ENCODE measurements at regions of chr1 and their contacts with region 1.

Region 1: DNA sequence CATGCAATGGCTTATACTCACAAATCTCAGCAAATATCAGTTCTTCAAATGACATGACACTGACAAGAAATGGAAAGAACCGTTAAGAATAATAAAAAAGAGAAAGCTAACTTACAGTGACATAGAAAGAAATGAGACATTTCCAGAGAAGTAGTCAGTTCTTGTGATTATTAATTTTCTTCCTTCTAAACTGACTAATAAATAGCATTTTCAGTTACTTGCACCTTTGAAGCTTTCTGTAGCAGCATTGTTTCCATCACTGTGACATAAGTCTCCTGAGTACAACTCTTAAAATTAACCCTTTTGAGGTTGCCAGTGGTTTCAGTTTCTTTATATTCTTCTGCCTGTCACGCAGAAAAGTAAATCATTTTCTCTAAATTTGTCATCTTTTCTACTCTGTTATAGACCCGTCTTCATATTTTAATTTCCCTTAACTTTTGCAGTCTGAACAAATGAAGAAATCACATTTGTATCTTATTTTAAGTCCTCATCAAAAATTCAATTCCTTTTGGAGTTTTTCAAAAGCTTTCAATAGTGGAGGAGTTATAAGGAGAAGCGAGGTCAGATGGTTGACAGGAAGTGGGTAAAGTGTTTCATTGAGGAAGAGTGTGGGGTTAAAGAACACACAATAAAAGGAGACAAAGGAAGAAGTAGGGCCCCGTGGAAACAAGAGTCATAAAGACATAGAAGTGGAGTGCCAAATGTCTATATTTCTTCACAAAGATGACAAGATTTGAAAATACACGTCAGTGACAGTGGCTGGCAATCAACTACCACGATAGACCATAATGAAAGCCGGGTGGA is 57.9 kb upstream of the S1PR1 start:
- DNase-seq: peak; percentile 65
- ATAC-seq: peak; percentile 69
- H3K4me3 Mint-ChIP-seq: peak overlapping the region; percentile 71
- H3K27ac Mint-ChIP-seq: peak overlapping the region; percentile 99
- H3K4me1 Mint-ChIP-seq: peaks cover 87% of the 10 kb centered on the region
- H3K27me3 Mint-ChIP-seq: no peaks in the 10 kb centered on the region

Region 2: DNA sequence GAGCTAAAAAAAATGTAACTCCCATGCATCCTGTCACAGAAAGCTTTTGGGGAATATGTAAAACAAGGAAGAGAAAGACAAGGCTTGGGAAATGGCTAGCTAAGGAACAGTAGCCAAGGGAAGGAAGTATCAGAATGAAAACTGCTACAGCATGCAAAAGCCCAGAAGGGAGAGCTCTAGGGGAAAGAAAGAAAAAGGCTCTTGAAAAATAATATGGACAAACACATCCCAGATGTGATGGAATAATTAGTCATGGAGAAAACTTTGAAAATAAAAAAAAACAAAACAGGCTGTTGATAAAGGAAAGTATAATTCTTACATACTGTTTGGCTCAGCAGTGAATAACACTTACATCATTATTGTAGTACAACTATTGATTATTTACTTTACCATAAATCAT is 507.3 kb before region 1 on chr1:
- CTCF ChIA-PET with region 1: no interaction called
- POLR2A ChIA-PET with region 1: no interaction called
- intact Hi-C with region 1: no loop called
- DNase-seq: no peak
- ATAC-seq: no peak
- H3K4me3 Mint-ChIP-seq: no peak overlapping the region
- H3K27ac Mint-ChIP-seq: no peak overlapping the region
- H3K4me1 Mint-ChIP-seq: no peaks in the 10 kb centered on the region
- H3K27me3 Mint-ChIP-seq: peaks cover 14% of the 10 kb centered on the region

Region 3: DNA sequence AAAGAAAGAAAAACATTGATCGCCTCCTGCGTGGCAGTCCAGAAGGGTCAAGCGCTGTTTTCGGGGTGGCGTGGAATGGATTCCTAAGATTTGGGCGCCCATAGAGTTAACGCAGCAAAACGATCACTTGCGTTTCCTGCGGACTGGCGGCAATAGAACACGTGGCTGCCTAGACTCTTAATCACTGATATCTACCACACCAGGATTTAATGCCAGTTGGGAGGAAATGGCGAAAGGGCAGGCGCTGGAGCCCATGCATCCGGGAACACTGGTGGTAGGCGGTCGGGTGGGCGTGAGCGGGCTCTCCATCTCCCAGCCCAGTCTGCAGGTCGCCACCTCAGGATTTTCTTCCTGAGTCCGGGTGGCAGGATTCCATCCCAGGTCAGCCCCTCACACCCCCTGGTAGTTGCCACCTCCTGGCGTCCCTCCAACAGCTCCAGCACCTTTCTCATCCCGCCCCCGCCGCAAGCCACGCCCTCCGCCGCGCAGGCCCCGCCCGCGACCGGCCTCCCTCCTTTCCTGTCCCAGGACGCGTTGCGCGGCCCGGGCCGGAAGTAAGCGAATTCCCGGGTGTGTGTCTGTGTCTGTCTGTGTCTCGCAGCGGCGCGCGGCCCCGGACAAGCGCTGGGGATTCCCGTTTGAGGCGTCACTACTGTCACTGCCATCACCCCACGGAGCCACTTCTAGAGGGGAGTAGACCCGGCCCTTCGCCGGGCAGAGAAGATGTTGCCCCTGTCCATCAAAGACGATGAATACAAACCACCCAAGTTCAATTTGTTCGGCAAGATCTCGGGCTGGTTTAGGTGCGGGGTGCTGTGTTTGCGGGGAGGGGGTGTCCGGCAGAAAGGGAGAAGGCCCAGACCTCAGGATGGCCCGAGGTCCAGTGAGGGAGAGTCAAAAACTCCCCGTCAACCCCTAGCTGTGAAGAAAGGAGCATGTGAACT is 283.1 kb before region 1 on chr1 and contains the start of gene SLC30A7:
- CTCF ChIA-PET with region 1: no interaction called
- POLR2A ChIA-PET with region 1: no interaction called
- intact Hi-C with region 1: loop called (anchors 1 to 2 kb)
- DNase-seq: peak; percentile 98
- ATAC-seq: peak; percentile 81
- H3K4me3 Mint-ChIP-seq: peak within 1 kb of the TSS; percentile 100
- H3K27ac Mint-ChIP-seq: peak within 1 kb of the TSS; percentile 100
- H3K4me1 Mint-ChIP-seq: peaks cover 44% of the 10 kb centered on the region
- H3K27me3 Mint-ChIP-seq: no peaks in the 10 kb centered on the region
- total RNA-seq, gene SLC30A7: 33.2 to 34.6 TPM

Region 4: DNA sequence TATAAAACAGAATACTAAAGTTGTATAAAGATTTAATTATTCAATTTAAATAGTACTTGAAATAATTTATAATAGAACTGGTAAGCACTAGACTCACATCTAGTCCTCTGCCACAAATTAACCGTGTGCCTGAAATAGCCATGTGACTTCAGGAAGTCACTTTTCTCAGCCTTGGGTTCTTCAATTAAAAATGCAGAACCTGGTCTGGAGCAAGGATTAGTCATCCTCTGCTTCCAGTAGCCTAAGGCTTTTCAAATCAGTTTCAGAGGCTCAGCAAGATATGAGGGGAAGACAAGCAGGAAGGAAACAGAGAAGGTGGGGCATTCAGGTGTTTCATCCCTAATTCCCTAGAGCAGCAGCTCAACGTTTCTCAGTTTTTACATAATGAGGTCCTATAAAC is 176.3 kb before region 1 on chr1:
- CTCF ChIA-PET with region 1: no interaction called
- POLR2A ChIA-PET with region 1: no interaction called
- intact Hi-C with region 1: loop called in 1 of 2 experiments (anchors 1 kb)
- DNase-seq: no peak
- ATAC-seq: no peak
- H3K4me3 Mint-ChIP-seq: no peak overlapping the region
- H3K27ac Mint-ChIP-seq: no peak overlapping the region
- H3K4me1 Mint-ChIP-seq: peaks cover 50% of the 10 kb centered on the region
- H3K27me3 Mint-ChIP-seq: no peaks in the 10 kb centered on the region

Region 5: GRCh38 chr1:101167891-101168290 is 11.0 kb before region 1 on chr1:
- CTCF ChIA-PET with region 1: interaction called, 3 read pairs
- POLR2A ChIA-PET with region 1: interaction called, 4 read pairs
- intact Hi-C with region 1: loop called in 1 of 2 experiments (anchors 1 kb)
- DNase-seq: no peak
- ATAC-seq: peak; percentile 92
- H3K4me3 Mint-ChIP-seq: no peak overlapping the region
- H3K27ac Mint-ChIP-seq: peak overlapping the region; percentile 74
- H3K4me1 Mint-ChIP-seq: peaks cover 35% of the 10 kb centered on the region
- H3K27me3 Mint-ChIP-seq: no peaks in the 10 kb centered on the region

Region 6: GRCh38 chr1:101267082-101267481 is 88.2 kb after region 1 on chr1:
- CTCF ChIA-PET with region 1: no interaction called
- POLR2A ChIA-PET with region 1: no interaction called
- intact Hi-C with region 1: no loop called
- DNase-seq: no peak
- ATAC-seq: no peak
- H3K4me3 Mint-ChIP-seq: no peak overlapping the region
- H3K27ac Mint-ChIP-seq: no peak overlapping the region
- H3K4me1 Mint-ChIP-seq: peaks cover 53% of the 10 kb centered on the region
- H3K27me3 Mint-ChIP-seq: no peaks in the 10 kb centered on the region

Region 7: DNA sequence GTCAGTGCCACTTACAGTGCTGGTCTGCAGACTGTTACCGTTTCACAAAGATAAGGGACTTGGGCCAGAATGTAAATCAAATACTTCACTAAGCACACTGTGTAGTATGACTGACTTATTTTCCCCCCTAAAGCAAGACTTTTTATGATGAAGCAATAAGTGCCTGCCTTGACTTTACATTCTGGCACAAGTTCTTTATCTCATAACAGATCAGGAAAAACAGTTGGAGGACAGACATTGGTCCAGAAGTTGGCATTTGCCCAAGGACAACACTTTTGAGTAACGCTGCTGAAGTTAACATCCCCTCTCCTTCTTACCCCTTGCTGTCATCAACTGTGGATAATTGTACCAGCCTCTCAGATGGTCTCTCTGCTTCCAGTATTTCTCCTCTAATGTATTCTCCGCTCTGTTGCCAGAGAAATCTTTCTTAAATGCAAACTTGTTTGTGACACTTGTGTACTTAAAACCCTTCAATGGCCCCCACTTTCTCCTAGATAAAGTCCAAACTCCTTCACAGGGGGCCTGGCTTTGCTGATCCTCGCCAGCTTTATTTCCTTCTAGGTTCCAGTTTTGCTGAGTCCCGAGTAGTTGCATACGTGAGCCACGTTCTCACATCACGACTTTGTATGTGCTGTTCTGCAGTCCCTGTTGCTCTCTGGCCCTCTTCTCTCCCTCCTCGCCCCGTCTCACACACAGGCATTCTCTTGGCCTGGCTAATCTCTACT is 103.6 kb after region 1 on chr1:
- CTCF ChIA-PET with region 1: interaction called, 24 read pairs
- POLR2A ChIA-PET with region 1: no interaction called
- intact Hi-C with region 1: loop called in 1 of 2 experiments (anchors 1 kb)
- DNase-seq: no peak
- ATAC-seq: no peak
- H3K4me3 Mint-ChIP-seq: no peak overlapping the region
- H3K27ac Mint-ChIP-seq: peak overlapping the region; percentile 95
- H3K4me1 Mint-ChIP-seq: peaks cover 93% of the 10 kb centered on the region
- H3K27me3 Mint-ChIP-seq: no peaks in the 10 kb centered on the region

Measured in activated CD4-positive, alpha-beta T cell treated with anti-CD3 and anti-CD28 coated beads for 36 hours (primary cell).